ENCODE measurements at regions of chr6 and their contacts with region 1.

Region 1: GRCh38 chr6:7554533-7555275 is 13.2 kb downstream of the DSP start:
- DNase-seq: no peak
- H3K4me3 ChIP-seq: no peak overlapping the region
- H3K27ac ChIP-seq: peak overlapping the region; percentile 72 to 91
- H3K4me1 ChIP-seq: peaks cover 0 to 6% of the 10 kb centered on the region in 2 donors
- H3K27me3 ChIP-seq: no peaks in the 10 kb centered on the region
- CTCF ChIP-seq: no peak
- POLR2A ChIP-seq: no peak

Region 2: DNA sequence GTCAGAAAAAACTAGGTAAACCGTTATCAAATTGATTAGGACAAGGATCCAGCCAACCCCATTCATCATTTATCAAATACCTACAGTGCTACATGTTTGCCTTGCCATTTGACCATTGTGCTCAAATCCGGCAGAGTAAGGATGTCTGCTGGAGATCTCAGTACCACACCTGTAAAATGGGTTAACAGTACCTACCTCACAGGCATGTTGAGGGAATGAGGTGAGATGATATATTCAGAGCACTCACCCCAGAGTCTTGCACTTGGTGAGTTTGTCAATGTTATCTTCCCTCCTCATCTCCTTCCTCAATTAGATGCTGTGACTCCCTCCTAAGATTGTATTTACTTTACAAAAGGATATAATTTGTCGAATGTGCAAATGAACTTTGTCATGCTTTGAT is 67.8 kb before region 1 on chr6:
- intact Hi-C with region 1: loop called (anchors 2 kb)
- DNase-seq: no peak
- H3K4me3 ChIP-seq: no peak overlapping the region
- H3K27ac ChIP-seq: no peak overlapping the region
- H3K4me1 ChIP-seq: no peaks in the 10 kb centered on the region
- H3K27me3 ChIP-seq: no peaks in the 10 kb centered on the region
- CTCF ChIP-seq: no peak
- POLR2A ChIP-seq: no peak

Region 3: GRCh38 chr6:7568021-7568420 is 13.3 kb after region 1 on chr6:
- intact Hi-C with region 1: no loop called
- DNase-seq: no peak
- H3K4me3 ChIP-seq: no peak overlapping the region
- H3K27ac ChIP-seq: no peak overlapping the region
- H3K4me1 ChIP-seq: no peaks in the 10 kb centered on the region
- H3K27me3 ChIP-seq: no peaks in the 10 kb centered on the region
- CTCF ChIP-seq: no peak
- POLR2A ChIP-seq: no peak

Measured in breast epithelium (tissue), 4 donors.